PC-9 (cell line): ENCODE measurements at regions of chr3 and their contacts with region 1.

Region 1: DNA sequence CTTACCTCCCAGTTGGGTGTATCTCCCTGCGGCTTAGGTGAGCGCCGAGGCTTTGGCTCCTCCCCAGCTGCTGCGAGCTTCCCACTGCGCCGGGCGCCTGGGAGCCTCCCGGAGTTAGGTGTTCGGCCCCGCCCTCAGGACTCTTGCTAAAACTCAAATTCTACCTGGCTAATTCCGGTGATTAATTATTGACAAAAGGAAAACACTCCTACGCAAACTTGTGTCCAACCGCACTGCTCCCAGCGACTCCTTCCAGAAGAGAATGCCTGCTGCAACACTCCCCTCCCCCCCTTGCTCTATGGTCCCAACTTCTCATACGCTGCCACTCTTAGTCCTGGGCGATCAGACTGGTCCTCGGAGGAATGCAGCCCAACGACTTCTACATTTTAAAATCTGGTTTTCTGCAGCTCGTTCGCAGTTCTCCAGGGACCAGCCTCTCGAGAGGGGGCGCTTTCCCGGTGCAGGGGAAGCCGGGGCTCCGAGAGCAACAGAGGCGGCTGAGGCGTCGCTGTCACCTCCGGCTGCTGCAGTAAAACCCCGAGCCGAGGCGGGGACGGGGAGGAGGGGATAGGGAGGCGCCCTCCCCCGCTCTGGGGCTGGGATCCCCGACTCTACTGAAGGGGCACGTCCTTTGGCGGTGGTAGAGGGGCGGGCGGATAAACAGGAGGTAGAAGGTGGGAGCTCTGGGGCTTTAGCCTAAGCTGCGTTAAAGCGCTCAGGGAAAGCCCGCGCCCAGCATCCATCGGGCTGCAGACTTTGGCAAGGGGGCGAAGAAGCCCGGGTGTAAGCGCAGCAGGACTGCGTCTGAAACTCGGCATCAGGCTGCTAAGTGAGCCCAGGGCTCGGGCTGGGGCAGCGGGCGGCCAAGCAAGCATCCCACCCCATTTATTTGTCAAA is at the start of gene SPTSSB:
- DNase-seq: peak; percentile 59 to 84
- H3K4me3 ChIP-seq: peak within 1 kb of the TSS; percentile 71
- H3K27ac ChIP-seq: no peak within 1 kb of the TSS
- H3K4me1 ChIP-seq: peaks cover 11% of the 10 kb centered on the region; the same call in 1 of the 2 replicates
- H3K27me3 ChIP-seq: no peaks in the 10 kb centered on the region
- CTCF ChIP-seq: peak; percentile 61
- total RNA-seq, gene SPTSSB: 1.2 and 4.0 TPM in 2 replicates

Region 2: DNA sequence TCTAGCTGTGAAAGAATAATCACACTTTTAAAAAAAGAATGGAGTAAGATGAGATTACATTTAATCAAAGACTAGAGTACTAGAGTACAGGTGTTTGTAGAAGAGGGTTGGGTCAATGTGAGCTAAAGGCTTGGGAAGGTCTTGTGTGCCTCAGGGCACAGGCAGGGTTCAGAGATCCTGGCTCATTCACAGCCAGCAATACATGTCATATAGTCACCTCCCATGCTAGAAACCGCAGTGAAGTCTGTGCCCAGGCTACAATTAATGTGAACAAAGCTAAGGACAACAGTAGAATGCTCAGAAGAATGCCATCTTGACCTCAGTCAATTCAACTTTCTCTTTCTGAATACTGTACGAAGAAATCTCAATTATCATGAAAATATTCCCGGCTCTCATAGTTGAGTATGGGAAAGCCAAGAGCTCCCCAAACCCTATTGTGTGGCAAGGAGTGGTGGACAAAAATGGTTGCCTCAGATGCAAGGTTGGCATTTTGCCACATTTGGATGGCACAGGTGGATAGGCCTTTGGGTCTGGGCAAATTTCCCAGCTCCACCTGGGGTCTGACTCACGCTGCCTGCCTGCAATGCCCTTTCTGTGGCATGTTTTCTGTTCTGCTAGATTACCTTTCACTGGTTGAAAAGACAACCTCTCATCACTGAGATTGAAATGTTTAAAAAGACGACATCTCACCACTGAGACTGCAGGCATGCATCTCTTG is 80.3 kb before region 1 on chr3:
- CTCF ChIA-PET with region 1: no interaction called
- POLR2A ChIA-PET with region 1: no interaction called
- intact Hi-C with region 1: loop called (anchors 1 kb)
- DNase-seq: peak; percentile 79 to 91
- H3K4me3 ChIP-seq: no peak overlapping the region
- H3K27ac ChIP-seq: peak overlapping the region; percentile 7; the same call in 1 of the 2 replicates
- H3K4me1 ChIP-seq: peaks cover 24% of the 10 kb centered on the region
- H3K27me3 ChIP-seq: no peaks in the 10 kb centered on the region
- CTCF ChIP-seq: no peak

Region 3: GRCh38 chr3:161315996-161316685 is 55.5 kb before region 1 on chr3:
- CTCF ChIA-PET with region 1: no interaction called
- POLR2A ChIA-PET with region 1: no interaction called
- intact Hi-C with region 1: loop called (anchors 1 kb)
- DNase-seq: peak; percentile 82 to 88
- H3K4me3 ChIP-seq: no peak overlapping the region
- H3K27ac ChIP-seq: peak overlapping the region; percentile 64
- H3K4me1 ChIP-seq: peaks cover 32% of the 10 kb centered on the region
- H3K27me3 ChIP-seq: no peaks in the 10 kb centered on the region
- CTCF ChIP-seq: no peak

Region 4: DNA sequence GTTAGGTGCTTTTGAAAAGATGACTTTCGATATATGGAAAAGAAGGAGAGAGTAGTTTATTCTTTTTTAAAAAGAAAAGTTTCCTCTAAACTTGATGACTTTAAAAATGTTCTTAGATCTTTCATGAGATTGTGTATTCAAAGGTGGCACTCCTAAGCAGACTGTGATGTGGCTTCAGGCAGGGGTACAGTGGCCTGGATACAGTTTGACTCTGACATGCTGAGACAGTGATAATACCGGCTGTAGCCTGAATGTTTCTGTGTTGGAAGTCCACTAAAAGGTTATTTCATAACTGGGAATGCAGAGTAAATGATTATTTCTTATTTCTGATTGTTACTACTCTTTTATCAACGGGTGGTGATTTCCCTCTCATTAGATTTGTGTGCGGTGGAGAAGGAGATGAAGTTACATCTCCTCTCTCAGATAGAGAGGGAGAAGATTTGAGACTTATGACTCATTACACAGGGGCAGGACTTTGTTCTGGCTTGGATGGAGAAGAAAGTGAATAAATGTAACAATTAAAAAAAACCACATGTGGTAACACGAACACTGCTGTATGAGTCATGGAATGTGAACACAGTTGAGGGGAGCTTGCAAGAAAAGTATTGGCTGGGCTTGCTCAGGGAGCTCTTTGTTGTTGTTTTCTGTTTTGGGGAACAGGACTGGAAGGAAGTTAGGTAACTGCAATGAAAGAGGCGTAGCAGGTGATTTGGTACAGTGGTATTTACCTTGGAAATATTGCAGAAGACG is 22.0 kb before region 1 on chr3:
- CTCF ChIA-PET with region 1: no interaction called
- POLR2A ChIA-PET with region 1: interaction called, 4 read pairs
- intact Hi-C with region 1: loop called (anchors 2 kb)
- DNase-seq: peak; percentile 68 to 97
- H3K4me3 ChIP-seq: no peak overlapping the region
- H3K27ac ChIP-seq: peak overlapping the region; percentile 62
- H3K4me1 ChIP-seq: peaks cover 39% of the 10 kb centered on the region
- H3K27me3 ChIP-seq: no peaks in the 10 kb centered on the region
- CTCF ChIP-seq: no peak

Region 5: DNA sequence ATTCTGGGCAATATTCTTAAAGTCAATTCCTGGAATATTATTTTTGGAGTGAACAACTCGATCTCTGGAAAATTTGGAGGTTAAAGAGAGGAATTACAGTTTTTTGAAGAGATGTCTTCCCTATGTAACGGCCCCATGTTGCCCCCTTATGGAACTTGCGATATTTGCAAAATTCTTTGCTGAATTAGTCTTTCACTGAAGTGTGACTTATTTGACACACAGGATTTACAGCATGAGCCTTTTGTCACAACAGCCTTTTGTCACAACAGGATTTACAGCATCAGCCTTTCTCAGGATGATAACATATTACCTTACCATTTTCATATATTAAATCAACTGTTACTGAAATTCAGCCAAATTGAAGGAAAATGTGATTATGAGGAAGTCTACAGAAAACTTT is 37.4 kb after region 1 on chr3:
- CTCF ChIA-PET with region 1: no interaction called
- POLR2A ChIA-PET with region 1: no interaction called
- intact Hi-C with region 1: loop called (anchors 5 kb)
- DNase-seq: peak; percentile 37 to 56
- H3K4me3 ChIP-seq: no peak overlapping the region
- H3K27ac ChIP-seq: no peak overlapping the region
- H3K4me1 ChIP-seq: peaks cover 21% of the 10 kb centered on the region
- H3K27me3 ChIP-seq: no peaks in the 10 kb centered on the region
- CTCF ChIP-seq: peak; percentile 74